ENCODE measurements at regions of chr17 and their contacts with region 1.

Region 1: DNA sequence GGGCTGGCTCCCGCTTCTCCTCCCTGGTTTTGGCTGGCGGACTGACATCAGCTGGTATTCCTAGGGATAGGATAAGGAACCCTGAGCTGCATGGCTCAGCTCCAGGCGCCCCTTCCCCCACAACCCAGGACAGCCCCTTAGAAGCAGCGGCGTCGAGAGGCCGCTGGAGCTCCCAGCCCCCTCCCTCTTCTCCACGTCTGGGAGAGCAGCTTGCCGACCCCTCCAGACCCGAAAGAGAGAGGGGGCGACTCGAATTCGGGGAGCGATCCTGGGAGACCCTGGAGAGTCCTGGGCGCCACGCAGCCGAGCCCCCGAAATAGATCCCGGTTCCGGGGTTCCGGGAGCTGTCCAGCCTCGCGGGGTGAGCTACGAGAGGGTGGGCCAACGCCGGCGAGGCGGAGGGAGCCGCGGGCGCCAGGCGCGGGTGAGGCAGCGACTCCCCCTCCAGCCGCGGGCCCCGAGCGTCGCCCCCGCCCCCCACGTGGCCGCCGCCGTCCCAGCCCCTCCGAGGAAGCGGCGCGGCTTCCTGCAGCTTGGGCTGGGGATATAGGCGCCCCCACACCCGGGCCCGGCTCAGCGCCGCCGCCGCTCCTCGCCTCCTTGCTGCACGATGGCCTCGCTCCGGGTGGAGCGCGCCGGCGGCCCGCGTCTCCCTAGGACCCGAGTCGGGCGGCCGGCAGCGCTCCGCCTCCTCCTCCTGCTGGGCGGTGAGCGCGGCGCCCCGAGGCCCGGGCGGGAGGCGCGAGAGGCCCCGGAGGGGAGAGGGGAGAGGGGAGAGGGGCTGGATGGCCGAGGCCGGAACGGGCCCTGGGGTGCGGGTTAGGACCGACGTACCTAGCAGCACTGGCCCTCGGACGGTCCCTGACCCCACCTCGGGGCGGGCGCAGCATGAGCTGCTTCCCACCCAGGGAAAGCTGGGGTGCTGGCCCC is at the start of gene RAMP2:
- DNase-seq: peak; percentile 40
- CTCF ChIP-seq: no peak

Region 2: GRCh38 chr17:42548070-42548837 is 212.7 kb before region 1 on chr17:
- CTCF ChIA-PET with region 1: interaction called, 10 read pairs
- POLR2A ChIA-PET with region 1: interaction called, 4 read pairs
- DNase-seq: peak; percentile 93
- CTCF ChIP-seq: peak; percentile 77

Region 3: GRCh38 chr17:42720996-42721583 is 39.8 kb before region 1 on chr17:
- CTCF ChIA-PET with region 1: interaction called, 18 read pairs
- POLR2A ChIA-PET with region 1: no interaction called
- DNase-seq: peak; percentile 75
- CTCF ChIP-seq: peak; percentile 73

Region 4: DNA sequence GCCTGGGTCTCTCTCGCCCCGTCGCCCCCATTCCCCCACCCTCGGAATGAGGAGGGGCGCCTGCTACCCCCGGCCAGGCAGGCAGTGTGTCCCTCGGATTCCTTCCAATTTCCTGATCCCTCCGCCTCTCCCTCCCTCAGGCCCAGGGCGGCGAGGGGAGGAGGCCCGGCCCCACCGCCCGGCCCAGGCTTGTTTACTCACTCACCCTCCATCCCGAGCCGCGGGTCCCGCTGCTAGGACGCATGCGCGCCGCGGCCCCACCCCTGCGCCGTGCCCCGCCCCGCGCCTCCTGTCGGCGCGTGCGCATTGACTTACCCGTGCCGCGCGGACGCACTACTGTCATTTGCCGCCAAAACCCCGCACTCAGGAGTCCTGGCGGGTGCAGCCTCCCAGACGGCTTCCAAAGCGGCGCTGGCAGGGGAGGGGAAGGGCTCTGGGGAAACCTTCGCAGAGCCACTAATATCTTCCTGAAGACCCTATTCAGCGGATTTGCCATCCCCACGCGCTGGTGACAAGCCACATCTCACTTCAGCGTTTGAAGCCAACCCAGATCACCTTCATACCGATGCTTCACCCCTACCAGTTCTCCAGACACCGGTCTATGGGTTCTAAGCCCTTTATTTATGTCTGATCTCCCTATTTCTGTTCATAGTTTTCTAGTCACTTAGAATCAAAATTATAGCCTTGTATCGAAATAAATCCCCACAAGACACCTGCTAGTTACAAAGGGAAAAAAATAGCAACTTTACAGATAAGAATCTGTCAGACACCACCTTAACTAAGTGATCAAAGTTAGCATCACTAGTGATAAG is 15.9 kb before region 1 on chr17 and contains the start of gene EZH1:
- CTCF ChIA-PET with region 1: interaction called, 99 read pairs
- POLR2A ChIA-PET with region 1: no interaction called
- DNase-seq: peak; percentile 100
- CTCF ChIP-seq: no peak

Region 5: GRCh38 chr17:42773290-42774035 is 12.5 kb after region 1 on chr17 and contains the start of gene VPS25:
- CTCF ChIA-PET with region 1: interaction called, 31 read pairs
- POLR2A ChIA-PET with region 1: interaction called, 3 read pairs
- DNase-seq: peak; percentile 88
- CTCF ChIP-seq: no peak

Region 6: GRCh38 chr17:42819944-42820535 is 59.1 kb after region 1 on chr17:
- CTCF ChIA-PET with region 1: interaction called, 15 read pairs
- POLR2A ChIA-PET with region 1: no interaction called
- DNase-seq: peak; percentile 62
- CTCF ChIP-seq: peak; percentile 72